Right cardiac atrium (tissue), 5 donors: ENCODE measurements at regions of chr4 and their contacts with region 1.

Region 1: GRCh38 chr4:8176547-8177399 is 18.2 kb upstream of the ABLIM2 start:
- DNase-seq: peak in 2 of 3 donors; percentile 78 to 81
- ATAC-seq: peak; percentile 74 to 77
- H3K4me3 ChIP-seq: no peak overlapping the region
- H3K27ac ChIP-seq: no peak overlapping the region
- H3K4me1 ChIP-seq: peaks cover 2% of the 10 kb centered on the region
- H3K27me3 ChIP-seq: no peaks in the 10 kb centered on the region

Region 2: DNA sequence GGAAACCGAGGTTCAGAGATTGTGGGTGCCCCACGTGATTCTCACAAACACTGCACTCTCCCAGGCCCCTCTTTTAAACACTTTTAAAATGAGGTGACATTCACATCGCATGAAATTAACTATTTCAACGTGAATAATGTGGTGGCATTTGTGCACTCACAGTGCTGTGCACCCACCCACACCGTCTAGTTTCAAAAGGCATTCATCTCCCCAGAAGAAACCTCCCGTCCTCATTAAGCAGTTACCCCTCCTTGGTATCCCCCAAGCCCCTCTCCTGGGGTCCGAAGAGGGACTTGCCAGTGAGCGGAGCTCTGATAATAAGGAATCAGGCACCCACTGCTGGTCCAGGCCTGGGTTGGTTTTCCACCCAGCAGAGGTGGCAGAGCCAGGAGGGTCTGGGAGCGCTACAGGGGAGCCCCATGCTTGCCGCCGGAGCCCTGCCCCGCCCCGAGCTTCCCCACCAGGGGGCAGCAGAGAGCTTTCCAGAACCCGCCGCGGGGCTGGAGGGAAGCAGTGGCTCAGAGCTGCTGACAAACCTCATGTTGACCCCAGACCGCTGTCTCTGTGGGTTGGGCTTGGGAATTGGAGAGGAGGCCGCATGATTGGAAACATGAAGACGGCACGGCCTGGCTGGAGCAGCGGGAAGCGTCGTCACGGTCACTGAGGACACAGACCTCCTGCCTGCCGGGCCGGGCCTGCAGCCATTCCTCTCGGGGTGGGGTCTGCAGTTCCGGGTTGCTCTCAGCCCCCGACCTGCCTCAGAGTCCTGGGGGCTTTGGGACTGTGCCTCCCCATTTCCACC is 65.3 kb after region 1 on chr4:
- intact Hi-C with region 1: loop called in 1 of 4 experiments (anchors 5 kb)
- DNase-seq: peak; percentile 92 to 97 (median 96)
- ATAC-seq: peak; percentile 79 to 85
- H3K4me3 ChIP-seq: no peak overlapping the region
- H3K27ac ChIP-seq: peak overlapping the region; percentile 76
- H3K4me1 ChIP-seq: peaks cover 6% of the 10 kb centered on the region
- H3K27me3 ChIP-seq: no peaks in the 10 kb centered on the region

Region 3: DNA sequence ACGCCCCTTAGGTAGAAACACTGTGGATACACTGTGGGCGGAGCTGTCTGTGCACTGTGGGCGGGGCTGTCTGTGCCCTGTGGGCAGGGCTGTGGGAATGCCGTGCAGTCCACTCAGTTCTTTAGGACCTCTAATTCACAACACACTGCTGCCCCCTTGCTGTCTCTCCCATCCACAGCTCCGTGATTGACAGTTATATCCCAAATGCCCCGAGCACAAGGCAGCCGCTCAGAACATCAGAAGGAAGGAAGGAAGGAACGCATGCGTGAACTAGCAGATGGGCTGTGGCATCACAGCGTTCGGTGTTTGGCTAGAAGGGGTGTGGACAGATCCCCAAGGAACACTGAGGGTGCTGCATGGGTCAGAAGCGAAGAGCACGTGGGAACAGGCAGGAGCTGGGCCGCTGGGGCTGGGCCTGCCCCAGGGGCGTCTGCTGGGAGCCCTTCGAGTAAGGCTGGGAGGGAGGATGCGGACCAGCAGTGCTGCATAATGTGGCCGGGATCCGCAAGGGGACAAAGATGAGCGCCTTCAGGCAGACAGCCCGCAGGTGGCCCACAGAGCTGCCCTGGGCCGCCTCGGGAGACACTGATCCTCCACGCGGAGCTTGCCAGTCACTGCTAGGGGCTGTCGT is 234.0 kb after region 1 on chr4:
- intact Hi-C with region 1: loop called in 2 of 4 experiments (anchors 10 kb)
- DNase-seq: peak; percentile 73 to 90 (median 88)
- ATAC-seq: peak; percentile 81 to 82
- H3K4me3 ChIP-seq: no peak overlapping the region
- H3K27ac ChIP-seq: no peak overlapping the region
- H3K4me1 ChIP-seq: no peaks in the 10 kb centered on the region
- H3K27me3 ChIP-seq: no peaks in the 10 kb centered on the region